ENCODE measurements at regions of chr6 and their contacts with region 1.

Region 1: GRCh38 chr6:151765444-151765886 is 42.0 kb upstream of the ESR1 start:
- H3K4me3 Mint-ChIP-seq: no peak overlapping the region
- H3K27ac Mint-ChIP-seq: no peak overlapping the region
- H3K4me1 Mint-ChIP-seq: peaks cover 12% of the 10 kb centered on the region
- H3K27me3 Mint-ChIP-seq: peaks cover 6% of the 10 kb centered on the region

Region 2: DNA sequence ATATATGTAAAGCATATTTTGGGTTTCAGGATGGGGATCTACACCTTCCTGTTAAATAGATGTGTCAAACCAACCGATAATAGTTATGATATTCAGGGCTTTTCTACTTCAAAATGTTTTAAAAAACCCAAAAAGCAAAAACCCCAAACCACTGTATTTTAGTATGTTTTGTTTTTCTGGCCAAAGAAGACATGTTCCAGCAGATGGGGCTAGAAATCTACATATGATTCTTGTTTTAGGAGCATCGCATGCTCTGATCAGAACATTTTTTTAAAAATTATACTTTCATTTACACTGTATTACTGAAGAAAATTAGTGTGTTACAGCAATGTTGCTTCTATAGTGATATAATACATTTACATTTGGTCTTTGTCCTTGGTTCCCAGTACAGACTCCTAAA is 324.5 kb before region 1 on chr6:
- intact Hi-C with region 1: loop called (anchors 10 kb)
- H3K4me3 Mint-ChIP-seq: no peak overlapping the region
- H3K27ac Mint-ChIP-seq: no peak overlapping the region
- H3K4me1 Mint-ChIP-seq: peaks cover 30% of the 10 kb centered on the region
- H3K27me3 Mint-ChIP-seq: no peaks in the 10 kb centered on the region

Region 3: DNA sequence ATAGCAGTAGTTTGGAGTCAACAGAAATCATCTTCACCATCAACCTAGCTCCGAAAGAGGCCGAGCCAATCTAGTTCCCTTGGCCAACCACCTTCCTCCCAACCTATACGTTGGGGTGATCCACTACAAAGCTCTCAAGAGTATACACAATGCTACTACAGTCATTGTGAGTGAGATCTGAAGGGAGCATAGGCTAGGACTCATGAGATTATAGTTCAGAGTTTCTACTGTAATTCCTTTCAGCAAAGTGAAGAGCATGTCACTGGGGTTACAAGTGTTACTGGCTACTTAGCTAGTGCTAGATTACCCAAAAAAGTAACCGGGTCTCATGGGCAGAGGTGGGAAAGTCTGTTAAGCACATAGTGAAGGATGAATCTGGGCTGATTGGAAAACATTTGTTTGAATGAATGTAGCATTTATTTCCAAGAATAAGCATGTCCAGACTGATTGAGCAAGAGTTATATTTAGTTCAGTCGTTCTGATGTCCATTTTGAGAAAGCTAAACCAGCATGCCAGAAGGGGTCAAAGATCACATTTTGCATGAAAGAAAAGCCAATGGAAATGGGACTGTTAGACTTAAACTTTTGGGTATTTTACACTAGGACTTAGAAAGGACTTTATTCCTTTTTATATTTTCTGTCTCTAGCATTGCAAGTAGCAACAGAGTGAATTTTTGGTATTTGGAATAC is 31.5 kb after region 1 on chr6:
- intact Hi-C with region 1: no loop called
- H3K4me3 Mint-ChIP-seq: no peak overlapping the region
- H3K27ac Mint-ChIP-seq: no peak overlapping the region
- H3K4me1 Mint-ChIP-seq: peaks cover 6% of the 10 kb centered on the region
- H3K27me3 Mint-ChIP-seq: no peaks in the 10 kb centered on the region

Region 4: GRCh38 chr6:151885234-151885633 is 119.8 kb after region 1 on chr6:
- intact Hi-C with region 1: no loop called
- H3K4me3 Mint-ChIP-seq: no peak overlapping the region
- H3K27ac Mint-ChIP-seq: no peak overlapping the region
- H3K4me1 Mint-ChIP-seq: no peaks in the 10 kb centered on the region
- H3K27me3 Mint-ChIP-seq: no peaks in the 10 kb centered on the region

Region 5: GRCh38 chr6:152124429-152125074 is 359.1 kb after region 1 on chr6:
- intact Hi-C with region 1: loop called (anchors 1 kb)
- H3K4me3 Mint-ChIP-seq: no peak overlapping the region
- H3K27ac Mint-ChIP-seq: no peak overlapping the region
- H3K4me1 Mint-ChIP-seq: peaks cover under 1% of the 10 kb centered on the region
- H3K27me3 Mint-ChIP-seq: no peaks in the 10 kb centered on the region

Region 6: GRCh38 chr6:152267967-152268845 is 502.7 kb after region 1 on chr6:
- intact Hi-C with region 1: loop called (anchors 2 kb)
- H3K4me3 Mint-ChIP-seq: no peak overlapping the region
- H3K27ac Mint-ChIP-seq: no peak overlapping the region
- H3K4me1 Mint-ChIP-seq: peaks cover 6% of the 10 kb centered on the region
- H3K27me3 Mint-ChIP-seq: no peaks in the 10 kb centered on the region

Measured in dendritic cell treated with granulocyte-macrophage colony-stimulating factor and Interleukin-4, amounts not matched to agents 40 ng/mL and 50 ng/mL, for 4 days (primary cell).